ENCODE measurements at regions of chr22 and their contacts with region 1.

Region 1: GRCh38 chr22:29245637-29246385 is 22.0 kb downstream of the RHBDD3 start:
- H3K4me3 ChIP-seq: no peak overlapping the region
- H3K27ac ChIP-seq: no peak overlapping the region
- H3K4me1 ChIP-seq: no peaks in the 10 kb centered on the region
- CTCF ChIP-seq: peak; percentile 92

Region 2: GRCh38 chr22:29154364-29155048 is 91.3 kb before region 1 on chr22:
- CTCF ChIA-PET with region 1: interaction called, 11 read pairs
- POLR2A ChIA-PET with region 1: no interaction called
- H3K4me3 ChIP-seq: no peak overlapping the region
- H3K27ac ChIP-seq: no peak overlapping the region
- H3K4me1 ChIP-seq: no peaks in the 10 kb centered on the region
- CTCF ChIP-seq: peak; percentile 95

Region 3: GRCh38 chr22:29219881-29220670 is 25.7 kb before region 1 on chr22:
- CTCF ChIA-PET with region 1: interaction called, 11 read pairs
- POLR2A ChIA-PET with region 1: no interaction called
- H3K4me3 ChIP-seq: no peak overlapping the region
- H3K27ac ChIP-seq: no peak overlapping the region
- H3K4me1 ChIP-seq: no peaks in the 10 kb centered on the region
- CTCF ChIP-seq: no peak

Region 4: GRCh38 chr22:29260601-29261315 is 14.9 kb after region 1 on chr22:
- CTCF ChIA-PET with region 1: interaction called, 30 read pairs
- POLR2A ChIA-PET with region 1: interaction called, 4 read pairs
- H3K4me3 ChIP-seq: no peak overlapping the region
- H3K27ac ChIP-seq: no peak overlapping the region
- H3K4me1 ChIP-seq: no peaks in the 10 kb centered on the region
- CTCF ChIP-seq: no peak